ENCODE measurements at regions of chr5 and their contacts with region 1.

Region 1: DNA sequence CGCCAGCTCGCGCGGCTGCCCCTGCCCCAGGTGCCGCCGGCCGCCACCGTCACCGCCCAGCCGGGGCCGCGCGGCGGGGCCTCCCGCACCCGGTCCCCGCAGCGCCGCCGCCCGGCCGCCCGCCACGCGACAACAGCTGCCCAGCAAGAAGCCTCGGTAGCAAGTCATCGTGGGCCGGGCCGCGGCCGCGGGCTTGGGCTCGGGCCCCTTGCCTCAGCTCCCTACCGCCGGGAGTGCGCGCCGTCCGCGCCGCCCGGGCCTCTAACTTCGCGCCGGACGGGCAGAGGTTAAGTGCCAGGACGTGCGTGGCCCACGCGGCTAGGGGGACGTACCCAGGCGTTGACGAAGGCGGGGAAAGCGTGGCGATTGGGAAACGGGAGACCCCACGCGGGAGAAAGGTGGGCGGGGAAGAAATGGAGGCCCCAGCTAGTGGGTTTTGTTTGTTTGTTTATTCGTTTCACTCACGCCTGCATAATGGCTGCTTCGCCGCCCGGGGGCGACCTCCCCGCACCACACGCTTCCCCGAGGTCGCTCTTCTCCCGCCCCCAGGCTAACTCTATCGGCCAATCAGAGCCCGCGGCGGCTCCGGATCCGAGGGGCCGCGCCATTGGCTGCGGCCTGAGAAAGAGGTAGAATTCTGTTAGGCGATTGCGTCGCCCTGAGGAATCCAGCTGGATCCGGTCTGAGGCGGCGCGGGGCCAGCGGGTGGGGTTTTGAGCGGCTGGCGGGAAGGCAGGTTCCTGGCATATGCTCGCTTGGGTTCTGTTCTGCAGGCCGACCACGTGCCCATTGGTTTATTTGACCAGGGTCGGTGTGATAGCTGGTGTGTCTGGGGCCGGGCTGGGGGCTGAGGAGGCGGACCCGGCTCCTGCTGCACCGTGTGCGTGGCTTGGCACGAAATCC is at the start of gene NADK2:
- DNase-seq: peak; percentile 96
- H3K4me3 Mint-ChIP-seq: peak within 1 kb of the TSS; percentile 80
- H3K27ac Mint-ChIP-seq: peak within 1 kb of the TSS; percentile 90
- H3K4me1 Mint-ChIP-seq: peaks cover 42% of the 10 kb centered on the region
- H3K27me3 Mint-ChIP-seq: no peaks in the 10 kb centered on the region
- total RNA-seq, gene NADK2: 19.9 to 20.0 TPM

Region 2: DNA sequence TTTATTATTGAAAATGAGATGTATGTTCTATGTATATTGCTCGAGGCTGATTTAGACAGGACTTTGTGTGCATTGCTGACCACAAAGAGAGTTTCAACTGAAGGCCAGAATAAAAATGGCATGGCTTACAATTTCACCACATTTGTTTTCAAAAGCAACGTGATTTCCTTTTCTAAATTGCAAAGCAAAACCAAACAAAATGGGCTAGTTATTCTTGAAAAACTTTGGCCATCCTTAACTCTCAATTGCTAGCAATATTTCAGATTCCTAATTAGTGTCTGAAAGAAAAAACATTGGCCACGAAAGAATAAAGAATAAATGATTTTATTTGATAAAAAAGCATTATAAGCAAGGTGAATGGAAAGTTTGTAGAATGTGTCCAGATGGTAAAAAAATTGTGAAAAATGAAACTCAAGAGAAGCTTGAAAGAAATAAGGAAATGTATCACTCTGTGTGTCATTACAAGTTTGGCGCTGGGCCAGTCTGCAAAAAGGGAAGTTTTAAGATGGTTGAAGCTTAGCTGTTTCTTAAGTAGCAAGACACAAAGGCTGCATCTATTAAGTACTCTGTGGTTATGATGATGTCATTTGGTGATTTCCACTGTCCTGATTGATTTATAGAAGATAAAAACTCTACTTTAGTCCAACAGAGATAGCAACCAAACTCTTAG is 922.4 kb before region 1 on chr5:
- CTCF ChIA-PET with region 1: no interaction called
- intact Hi-C with region 1: loop called (anchors 5 kb)
- DNase-seq: peak; percentile 94
- H3K4me3 Mint-ChIP-seq: no peak overlapping the region
- H3K27ac Mint-ChIP-seq: peak overlapping the region; percentile 24
- H3K4me1 Mint-ChIP-seq: peaks cover 14% of the 10 kb centered on the region
- H3K27me3 Mint-ChIP-seq: peaks cover 24% of the 10 kb centered on the region

Region 3: DNA sequence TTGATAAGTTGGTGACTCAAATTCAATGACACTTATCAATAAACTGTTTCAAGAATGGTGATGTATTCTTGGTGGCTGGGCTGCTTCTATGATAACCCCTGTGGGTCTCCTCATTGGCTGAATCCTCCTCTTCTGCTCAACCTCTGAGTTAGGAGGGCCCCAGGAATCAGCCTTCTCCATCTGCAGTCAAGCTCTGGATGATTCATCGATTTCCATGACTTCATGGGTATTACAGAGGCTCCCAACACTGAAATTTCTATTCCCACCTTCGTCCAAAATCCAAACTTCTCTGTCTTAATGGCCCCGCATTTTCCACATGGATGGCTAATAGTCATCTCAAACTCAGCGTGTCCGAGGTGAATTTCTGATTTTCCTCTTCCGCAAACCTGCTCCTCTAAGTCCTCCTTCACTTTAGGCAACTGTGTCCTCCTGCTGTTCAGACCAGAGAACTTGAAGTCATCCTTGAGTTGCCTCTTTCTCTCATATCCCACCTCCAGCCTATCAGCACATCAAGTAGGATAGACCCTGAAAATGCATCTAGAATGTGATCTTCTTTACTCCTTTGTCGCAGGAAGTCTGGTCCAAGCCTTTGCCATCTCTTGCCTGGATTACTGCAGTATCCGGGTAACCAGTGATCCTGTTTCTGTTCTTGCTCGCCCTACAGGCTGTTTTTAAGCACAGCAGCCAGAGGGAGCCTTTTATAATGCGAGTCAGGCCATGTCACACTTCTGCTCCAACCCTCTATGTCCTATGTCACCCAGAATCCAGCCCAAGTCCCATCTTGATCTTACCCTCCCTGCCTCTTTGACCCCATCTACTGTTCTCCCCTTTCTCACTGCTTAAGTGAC is 426.6 kb before region 1 on chr5:
- CTCF ChIA-PET with region 1: no interaction called
- intact Hi-C with region 1: loop called (anchors 5 kb)
- DNase-seq: peak; percentile 76
- H3K4me3 Mint-ChIP-seq: no peak overlapping the region
- H3K27ac Mint-ChIP-seq: no peak overlapping the region
- H3K4me1 Mint-ChIP-seq: peaks cover 45% of the 10 kb centered on the region
- H3K27me3 Mint-ChIP-seq: no peaks in the 10 kb centered on the region

Region 4: DNA sequence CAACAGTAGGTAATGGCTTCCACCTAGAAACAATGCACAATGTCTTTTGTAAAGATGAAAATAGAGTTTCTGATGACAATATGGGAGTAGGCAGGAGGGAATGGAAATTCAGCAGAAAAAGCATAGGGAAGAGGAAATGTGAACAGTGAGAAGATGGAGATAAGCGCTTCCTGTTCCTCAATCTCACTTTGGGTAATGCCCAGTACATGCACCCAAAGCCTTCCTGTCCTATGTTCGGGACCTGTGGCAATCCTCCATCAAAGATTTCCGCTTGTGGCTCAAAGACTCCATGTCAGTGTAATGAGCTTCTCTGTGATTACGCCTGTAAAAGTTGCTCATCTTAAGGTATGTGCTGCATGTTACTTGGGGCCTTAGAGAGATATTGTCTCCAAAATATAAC is 253.4 kb before region 1 on chr5:
- CTCF ChIA-PET with region 1: no interaction called
- intact Hi-C with region 1: no loop called
- DNase-seq: no peak
- H3K4me3 Mint-ChIP-seq: no peak overlapping the region
- H3K27ac Mint-ChIP-seq: no peak overlapping the region
- H3K4me1 Mint-ChIP-seq: no peaks in the 10 kb centered on the region
- H3K27me3 Mint-ChIP-seq: peaks cover 16% of the 10 kb centered on the region

Region 5: DNA sequence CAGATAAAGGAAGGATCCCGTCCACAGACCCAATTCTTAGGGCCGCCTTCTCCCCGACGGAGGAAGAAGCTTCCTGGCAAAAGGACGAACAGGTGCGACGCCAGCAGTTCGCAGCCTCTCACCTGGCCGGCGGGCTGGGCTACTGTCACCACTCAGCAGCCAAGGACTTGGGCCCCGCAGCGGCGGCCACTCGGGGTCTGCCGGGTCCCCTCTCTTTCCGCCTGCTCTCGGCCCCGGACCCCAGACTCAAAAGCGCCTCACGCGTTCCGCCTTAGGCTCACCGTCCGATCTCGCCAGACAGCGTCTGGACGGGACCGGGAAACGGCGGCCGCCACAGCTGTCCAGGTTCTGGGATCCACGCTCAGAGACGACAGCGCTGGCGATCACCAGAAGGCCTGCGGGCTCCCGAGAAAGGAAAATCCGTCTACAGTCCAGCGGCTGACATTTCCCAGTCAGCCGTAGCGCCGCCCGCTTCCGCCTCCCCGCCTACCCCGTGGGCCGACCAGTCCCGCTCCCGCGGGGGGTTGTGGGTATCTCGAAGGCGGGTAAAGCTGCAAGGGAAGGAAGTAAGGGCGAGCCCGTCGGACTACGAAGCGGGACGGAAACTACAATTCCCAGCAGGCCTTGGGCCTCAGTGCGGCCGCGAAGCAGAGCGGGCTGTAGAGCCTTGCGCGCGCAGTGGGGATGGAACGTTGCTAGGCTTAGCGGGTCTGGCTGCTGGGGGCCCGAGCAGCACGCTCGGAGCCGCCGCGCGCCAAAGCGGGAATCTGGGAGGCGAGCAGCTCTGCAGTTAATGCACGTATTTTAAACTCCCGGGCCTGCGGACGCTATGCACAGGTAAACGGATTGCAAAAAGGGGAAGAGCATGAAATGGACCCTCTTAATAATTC is 90.2 kb before region 1 on chr5 and contains the starts of genes LMBRD2 and SKP2:
- CTCF ChIA-PET with region 1: interaction called, 8 read pairs
- intact Hi-C with region 1: loop called (anchors 1 kb)
- DNase-seq: peak; percentile 98
- H3K4me3 Mint-ChIP-seq: peak within 1 kb of the TSS; percentile 96
- H3K27ac Mint-ChIP-seq: peak within 1 kb of the TSS; percentile 76
- H3K4me1 Mint-ChIP-seq: peaks cover 67% of the 10 kb centered on the region
- H3K27me3 Mint-ChIP-seq: no peaks in the 10 kb centered on the region
- total RNA-seq, gene LMBRD2: 7.6 to 8.0 TPM
- total RNA-seq, gene SKP2: 44.4 to 48.1 TPM

Region 6: DNA sequence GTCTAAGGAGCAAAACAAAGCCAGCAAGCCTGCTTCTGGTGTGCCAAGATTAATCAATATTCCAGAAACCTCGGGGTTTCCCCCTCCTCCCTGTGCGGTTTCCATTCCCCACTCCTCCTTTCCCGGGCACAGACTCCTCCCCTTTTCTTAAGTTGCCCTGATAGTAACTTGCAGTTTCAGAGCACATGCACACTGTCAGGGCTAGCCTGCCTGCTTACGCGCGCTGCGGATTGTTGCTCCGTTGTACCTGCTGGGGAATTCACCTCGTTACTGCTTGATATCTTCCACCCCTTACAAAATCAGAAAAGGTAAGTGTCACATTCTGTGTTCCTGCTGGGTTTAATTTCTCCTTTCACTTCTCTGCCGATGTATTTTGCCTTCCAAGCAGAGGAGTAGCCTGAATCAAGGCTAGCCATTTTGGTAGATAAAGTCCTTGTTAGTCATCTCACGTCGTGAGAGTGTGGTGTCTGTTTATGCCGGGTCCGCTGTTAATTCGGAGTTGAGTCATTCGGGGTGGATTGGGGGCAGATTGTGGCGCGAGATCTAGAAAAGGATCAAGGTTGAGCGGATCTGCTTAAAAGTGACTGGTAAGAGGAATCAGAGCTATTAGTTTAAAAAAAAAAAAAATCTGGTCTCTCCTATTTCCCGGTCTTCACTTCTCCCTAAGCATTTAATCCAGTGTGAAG is 364.7 kb after region 1 on chr5 and contains the start of gene SLC1A3:
- CTCF ChIA-PET with region 1: no interaction called
- intact Hi-C with region 1: loop called (anchors 1 kb)
- DNase-seq: peak; percentile 80
- H3K4me3 Mint-ChIP-seq: peak within 1 kb of the TSS; percentile 71
- H3K27ac Mint-ChIP-seq: peak within 1 kb of the TSS; percentile 67
- H3K4me1 Mint-ChIP-seq: peaks cover 19% of the 10 kb centered on the region
- H3K27me3 Mint-ChIP-seq: peaks cover 47% of the 10 kb centered on the region
- total RNA-seq, gene SLC1A3: 0.86 to 0.99 TPM

Region 7: DNA sequence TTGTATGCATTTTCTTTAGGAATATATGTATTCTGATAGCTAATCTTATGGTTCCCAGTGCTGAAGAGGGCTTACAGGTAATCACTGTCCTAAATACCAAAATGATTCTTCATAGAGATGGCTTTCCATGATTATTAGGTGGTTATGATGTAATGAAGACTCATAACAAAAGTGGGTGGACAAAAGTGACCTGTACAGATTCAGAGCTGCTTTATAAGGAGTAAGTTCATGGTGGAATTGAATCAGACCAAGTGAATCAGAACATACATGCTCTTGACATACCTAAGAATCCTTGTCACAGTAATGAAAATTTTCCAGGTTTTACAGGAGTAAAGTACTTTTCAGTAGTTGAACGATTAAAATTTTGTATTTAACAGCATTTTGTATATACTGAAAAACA is 740.3 kb after region 1 on chr5:
- CTCF ChIA-PET with region 1: no interaction called
- intact Hi-C with region 1: no loop called
- DNase-seq: no peak
- H3K4me3 Mint-ChIP-seq: no peak overlapping the region
- H3K27ac Mint-ChIP-seq: no peak overlapping the region
- H3K4me1 Mint-ChIP-seq: peaks cover 44% of the 10 kb centered on the region
- H3K27me3 Mint-ChIP-seq: no peaks in the 10 kb centered on the region

Region 8: DNA sequence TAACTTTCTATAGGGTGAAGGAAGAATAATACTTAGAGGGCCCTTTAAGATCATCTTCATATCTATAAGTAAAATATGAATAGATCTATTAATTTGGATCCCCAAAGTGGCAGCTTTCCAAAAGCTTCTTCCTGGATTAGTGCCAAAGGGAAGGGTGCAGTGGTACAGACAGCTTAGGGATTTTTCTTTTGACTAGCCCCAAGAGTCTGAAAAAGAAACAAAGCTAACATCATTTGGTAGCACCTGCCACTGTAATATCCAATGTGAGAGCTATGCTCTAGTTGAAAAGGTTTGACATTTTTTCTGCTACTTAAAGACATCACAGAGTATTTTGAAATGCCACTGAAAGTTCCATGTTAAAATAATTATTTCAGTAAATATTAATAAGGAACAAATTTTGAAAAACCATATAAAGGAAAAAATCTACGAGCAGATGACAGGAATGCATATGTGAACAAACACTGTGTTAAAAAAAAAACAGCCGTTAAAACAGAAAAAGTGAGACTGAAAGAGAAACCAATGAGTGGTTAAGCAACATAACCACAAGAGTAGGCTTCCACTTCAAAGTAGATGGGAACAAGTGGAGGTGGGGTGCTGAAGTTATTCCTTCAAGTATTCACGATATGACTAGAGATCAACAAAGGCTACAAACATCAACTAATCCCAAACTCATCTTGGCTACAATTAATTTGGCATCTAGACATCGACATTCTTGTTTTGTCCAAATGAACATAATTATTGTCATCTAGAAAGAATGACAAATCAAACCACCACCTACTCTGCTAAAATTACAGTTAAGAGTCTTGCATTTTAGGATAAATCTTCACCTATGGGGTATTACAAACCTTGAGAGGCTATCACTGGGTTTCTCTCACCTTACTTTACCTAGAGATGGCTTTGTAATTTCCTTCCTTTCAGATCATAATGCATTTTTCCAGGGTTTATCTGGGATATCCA is 869.8 kb after region 1 on chr5:
- CTCF ChIA-PET with region 1: no interaction called
- intact Hi-C with region 1: loop called (anchors 5 kb)
- DNase-seq: peak; percentile 25
- H3K4me3 Mint-ChIP-seq: peak overlapping the region; percentile 8
- H3K27ac Mint-ChIP-seq: peak overlapping the region; percentile 37
- H3K4me1 Mint-ChIP-seq: peaks cover 37% of the 10 kb centered on the region
- H3K27me3 Mint-ChIP-seq: peaks cover 13% of the 10 kb centered on the region